Activated CD4-positive, alpha-beta memory T cell treated with anti-CD3 and anti-CD28 coated beads for 36 hours (primary cell): ENCODE measurements at regions of chr2 and their contacts with region 1.

Region 1: GRCh38 chr2:38947240-38948239 is 57.9 kb downstream of the ARHGEF33 start:
- DNase-seq: peak; percentile 80
- H3K4me3 Mint-ChIP-seq: no peak overlapping the region
- H3K27ac Mint-ChIP-seq: no peak overlapping the region
- H3K4me1 Mint-ChIP-seq: no peaks in the 10 kb centered on the region
- H3K27me3 Mint-ChIP-seq: no peaks in the 10 kb centered on the region

Region 2: GRCh38 chr2:38432820-38433606 is 514.5 kb before region 1 on chr2:
- CTCF ChIA-PET with region 1: no interaction called
- POLR2A ChIA-PET with region 1: no interaction called
- intact Hi-C with region 1: no loop called
- DNase-seq: no peak
- H3K4me3 Mint-ChIP-seq: no peak overlapping the region
- H3K27ac Mint-ChIP-seq: no peak overlapping the region
- H3K4me1 Mint-ChIP-seq: no peaks in the 10 kb centered on the region
- H3K27me3 Mint-ChIP-seq: peaks cover 7% of the 10 kb centered on the region

Region 3: DNA sequence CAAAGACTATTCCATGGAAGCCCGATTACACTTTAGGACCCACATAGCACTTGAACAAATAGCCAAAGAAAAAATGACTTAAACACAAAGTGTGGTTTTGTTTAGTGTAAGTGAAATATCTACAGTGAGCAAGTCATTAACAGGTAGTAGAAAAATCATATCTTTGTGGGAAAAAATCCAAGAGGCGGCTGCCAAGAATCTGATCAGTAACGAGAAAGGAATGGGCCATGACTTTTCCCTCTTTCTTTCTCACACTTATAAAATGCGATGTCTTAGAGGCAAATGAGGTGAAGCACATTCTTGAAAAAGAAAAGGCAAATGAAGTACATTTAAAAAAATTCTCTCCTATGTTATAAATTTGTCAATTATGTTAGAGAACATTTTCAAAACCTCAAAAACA is 182.4 kb before region 1 on chr2:
- CTCF ChIA-PET with region 1: no interaction called
- POLR2A ChIA-PET with region 1: no interaction called
- intact Hi-C with region 1: no loop called
- DNase-seq: no peak
- H3K4me3 Mint-ChIP-seq: no peak overlapping the region
- H3K27ac Mint-ChIP-seq: no peak overlapping the region
- H3K4me1 Mint-ChIP-seq: no peaks in the 10 kb centered on the region
- H3K27me3 Mint-ChIP-seq: no peaks in the 10 kb centered on the region

Region 4: GRCh38 chr2:38935568-38936172 is 11.9 kb before region 1 on chr2:
- CTCF ChIA-PET with region 1: interaction called, 14 read pairs
- POLR2A ChIA-PET with region 1: no interaction called
- intact Hi-C with region 1: no loop called
- DNase-seq: no peak
- H3K4me3 Mint-ChIP-seq: no peak overlapping the region
- H3K27ac Mint-ChIP-seq: no peak overlapping the region
- H3K4me1 Mint-ChIP-seq: peaks cover 3% of the 10 kb centered on the region
- H3K27me3 Mint-ChIP-seq: no peaks in the 10 kb centered on the region

Region 5: GRCh38 chr2:38959938-38960608 is 12.5 kb after region 1 on chr2:
- CTCF ChIA-PET with region 1: interaction called, 25 read pairs
- POLR2A ChIA-PET with region 1: no interaction called
- intact Hi-C with region 1: no loop called
- DNase-seq: peak; percentile 82
- H3K4me3 Mint-ChIP-seq: peak overlapping the region; percentile 46
- H3K27ac Mint-ChIP-seq: no peak overlapping the region
- H3K4me1 Mint-ChIP-seq: peaks cover 5% of the 10 kb centered on the region
- H3K27me3 Mint-ChIP-seq: peaks cover 18% of the 10 kb centered on the region

Region 6: DNA sequence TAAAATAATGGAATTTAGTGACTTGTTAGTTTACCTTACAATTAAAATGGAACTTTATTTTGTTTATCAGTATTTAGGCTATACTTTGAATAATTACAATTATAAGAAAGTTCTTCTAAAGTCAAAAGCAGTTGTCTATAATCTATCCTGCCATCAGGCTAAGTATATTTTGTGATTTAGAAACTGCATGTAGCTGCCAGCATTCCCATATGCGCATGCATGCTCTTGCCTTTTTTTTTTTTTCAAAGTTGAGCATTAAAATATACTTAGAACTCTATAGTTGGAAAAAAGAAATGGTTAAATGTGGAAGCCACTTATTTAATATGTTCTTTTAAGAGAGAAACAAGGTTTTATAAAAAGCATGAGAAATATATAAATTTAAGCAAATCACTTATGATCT is 41.2 kb after region 1 on chr2:
- CTCF ChIA-PET with region 1: interaction called, 15 read pairs
- POLR2A ChIA-PET with region 1: no interaction called
- intact Hi-C with region 1: no loop called
- DNase-seq: no peak
- H3K4me3 Mint-ChIP-seq: no peak overlapping the region
- H3K27ac Mint-ChIP-seq: no peak overlapping the region
- H3K4me1 Mint-ChIP-seq: peaks cover 6% of the 10 kb centered on the region
- H3K27me3 Mint-ChIP-seq: no peaks in the 10 kb centered on the region

Region 7: GRCh38 chr2:39059366-39059952 is 111.9 kb after region 1 on chr2:
- CTCF ChIA-PET with region 1: interaction called, 12 read pairs
- POLR2A ChIA-PET with region 1: no interaction called
- intact Hi-C with region 1: loop called (anchors 5 kb)
- DNase-seq: no peak
- H3K4me3 Mint-ChIP-seq: no peak overlapping the region
- H3K27ac Mint-ChIP-seq: no peak overlapping the region
- H3K4me1 Mint-ChIP-seq: no peaks in the 10 kb centered on the region
- H3K27me3 Mint-ChIP-seq: no peaks in the 10 kb centered on the region

Region 8: GRCh38 chr2:39227628-39228412 is 280.3 kb after region 1 on chr2:
- CTCF ChIA-PET with region 1: interaction called, 187 read pairs
- POLR2A ChIA-PET with region 1: no interaction called
- intact Hi-C with region 1: loop called (anchors 1 kb)
- DNase-seq: peak; percentile 87
- H3K4me3 Mint-ChIP-seq: peak overlapping the region; percentile 56
- H3K27ac Mint-ChIP-seq: peak overlapping the region; percentile 59
- H3K4me1 Mint-ChIP-seq: peaks cover 36% of the 10 kb centered on the region
- H3K27me3 Mint-ChIP-seq: no peaks in the 10 kb centered on the region

Region 9: DNA sequence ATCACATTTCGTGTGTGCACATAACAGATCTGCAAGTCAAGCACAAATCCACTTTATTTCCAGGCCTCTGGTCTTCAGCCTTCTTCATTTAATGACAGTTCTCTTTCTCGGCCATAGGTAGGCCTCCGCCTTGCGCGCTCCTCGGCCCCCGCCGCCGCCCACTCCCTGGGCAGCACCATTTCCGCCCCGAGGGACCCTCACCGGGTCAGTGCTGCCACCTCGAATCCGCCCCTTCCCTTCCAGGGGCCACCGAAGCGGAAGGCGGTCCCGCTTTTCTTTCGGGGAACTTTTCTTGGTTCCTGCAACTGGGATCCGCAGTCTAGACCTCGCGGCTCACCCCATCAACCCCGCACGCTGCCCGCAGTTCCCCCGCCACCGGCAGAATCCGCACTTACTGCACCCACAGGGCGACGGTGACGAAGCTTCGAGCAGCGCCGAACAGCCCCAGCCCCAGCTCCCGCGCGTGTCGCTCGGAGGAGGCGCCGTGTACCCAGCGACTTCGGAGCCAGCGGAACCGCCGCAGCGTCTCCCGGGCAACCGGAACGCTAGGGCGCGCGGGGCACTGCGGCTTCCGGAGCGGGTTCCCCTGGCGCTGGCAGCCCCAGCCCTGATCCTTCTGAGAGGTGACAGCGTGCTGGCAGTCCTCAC is 296.1 kb after region 1 on chr2 and contains the start of gene CDKL4:
- CTCF ChIA-PET with region 1: interaction called, 13 read pairs
- POLR2A ChIA-PET with region 1: no interaction called
- intact Hi-C with region 1: loop called (anchors 5 kb)
- DNase-seq: peak; percentile 61
- H3K4me3 Mint-ChIP-seq: peak within 1 kb of the TSS; percentile 76
- H3K27ac Mint-ChIP-seq: peak within 1 kb of the TSS; percentile 36
- H3K4me1 Mint-ChIP-seq: peaks cover 12% of the 10 kb centered on the region
- H3K27me3 Mint-ChIP-seq: no peaks in the 10 kb centered on the region
- total RNA-seq, gene CDKL4: 0.14 to 0.22 TPM